ENCODE measurements at regions of chr9 and their contacts with region 1.

Region 1: GRCh38 chr9:19992556-19992955 is 203.7 kb upstream of the SLC24A2 start:
- DNase-seq: no peak
- ATAC-seq: no peak
- H3K4me3 ChIP-seq: no peak overlapping the region
- H3K4me3 Mint-ChIP-seq: no peak overlapping the region
- H3K27ac ChIP-seq: no peak overlapping the region
- H3K27ac Mint-ChIP-seq: no peak overlapping the region
- H3K4me1 ChIP-seq: no peaks in the 10 kb centered on the region
- H3K4me1 Mint-ChIP-seq: peaks cover 5% of the 10 kb centered on the region
- H3K27me3 ChIP-seq: no peaks in the 10 kb centered on the region
- H3K27me3 Mint-ChIP-seq: no peaks in the 10 kb centered on the region
- CTCF ChIP-seq: no peak

Region 2: DNA sequence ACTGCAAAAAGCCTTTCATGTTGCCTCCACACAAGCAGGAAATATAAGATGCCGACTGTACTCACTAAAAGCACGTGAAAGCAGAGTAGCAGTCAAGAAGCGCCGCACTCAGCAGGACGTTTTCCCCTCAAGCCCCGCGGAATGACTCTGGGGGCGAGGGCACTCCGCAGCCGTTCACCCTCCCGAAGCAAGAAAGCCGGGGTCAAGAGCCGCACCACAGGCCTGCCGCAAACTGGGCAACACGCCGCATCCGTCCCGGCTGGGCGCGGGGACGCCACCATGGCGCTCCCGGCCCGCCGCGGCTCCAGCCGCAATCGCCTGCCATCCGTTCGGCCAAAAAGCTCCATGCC is 612.9 kb before region 1 on chr9:
- CTCF ChIA-PET with region 1: no interaction called
- POLR2A ChIA-PET with region 1: no interaction called
- intact Hi-C with region 1: no loop called
- DNase-seq: peak in 8 of 14 experiments; percentile 23 to 73 (median 36)
- ATAC-seq: peak; percentile 49
- H3K4me3 ChIP-seq: peak overlapping the region; percentile 60
- H3K4me3 Mint-ChIP-seq: peak overlapping the region; percentile 90
- H3K27ac ChIP-seq: peak overlapping the region; percentile 88 to 90
- H3K27ac Mint-ChIP-seq: peak overlapping the region; percentile 94
- H3K4me1 ChIP-seq: peaks cover 23% of the 10 kb centered on the region
- H3K4me1 Mint-ChIP-seq: peaks cover 52% of the 10 kb centered on the region
- H3K27me3 ChIP-seq: no peaks in the 10 kb centered on the region
- H3K27me3 Mint-ChIP-seq: no peaks in the 10 kb centered on the region
- CTCF ChIP-seq: no peak

Region 3: GRCh38 chr9:19940811-19941535 is 51.6 kb before region 1 on chr9:
- CTCF ChIA-PET with region 1: no interaction called
- POLR2A ChIA-PET with region 1: no interaction called
- intact Hi-C with region 1: no loop called
- DNase-seq: no peak
- ATAC-seq: no peak
- H3K4me3 ChIP-seq: no peak overlapping the region
- H3K4me3 Mint-ChIP-seq: no peak overlapping the region
- H3K27ac ChIP-seq: no peak overlapping the region
- H3K27ac Mint-ChIP-seq: no peak overlapping the region
- H3K4me1 ChIP-seq: no peaks in the 10 kb centered on the region
- H3K4me1 Mint-ChIP-seq: no peaks in the 10 kb centered on the region
- H3K27me3 ChIP-seq: no peaks in the 10 kb centered on the region
- H3K27me3 Mint-ChIP-seq: peaks cover 16% of the 10 kb centered on the region
- CTCF ChIP-seq: no peak

Region 4: DNA sequence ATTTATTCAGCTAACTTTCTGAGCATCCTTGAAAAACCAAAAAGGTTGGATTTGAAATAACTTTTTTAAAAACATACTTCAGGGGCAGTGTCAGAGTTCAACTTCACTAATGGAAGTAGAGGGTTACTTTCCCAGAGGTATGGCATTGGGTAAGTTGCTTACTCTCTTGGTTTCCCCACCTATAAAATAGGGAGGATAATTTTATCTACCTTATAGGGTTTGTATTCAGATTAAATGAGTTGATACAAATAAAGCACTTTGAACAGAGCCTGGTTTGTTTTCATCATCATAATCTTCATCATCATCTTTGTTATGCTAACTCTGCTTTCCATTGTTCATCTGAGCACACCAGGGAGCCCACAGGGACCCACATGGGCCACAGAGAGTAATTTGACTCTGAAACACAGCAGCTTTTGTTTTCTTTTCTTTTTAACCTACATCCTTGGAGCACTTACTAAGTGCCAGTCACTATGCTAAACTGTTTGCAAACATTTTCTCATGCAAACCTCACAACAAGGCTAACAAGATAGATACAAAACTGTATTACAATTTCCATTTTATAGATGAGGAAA is 24.6 kb before region 1 on chr9:
- CTCF ChIA-PET with region 1: no interaction called
- POLR2A ChIA-PET with region 1: no interaction called
- intact Hi-C with region 1: loop called in 1 of 2 experiments (anchors 2 kb)
- DNase-seq: no peak
- ATAC-seq: no peak
- H3K4me3 ChIP-seq: no peak overlapping the region
- H3K4me3 Mint-ChIP-seq: no peak overlapping the region
- H3K27ac ChIP-seq: no peak overlapping the region
- H3K27ac Mint-ChIP-seq: no peak overlapping the region
- H3K4me1 ChIP-seq: no peaks in the 10 kb centered on the region
- H3K4me1 Mint-ChIP-seq: no peaks in the 10 kb centered on the region
- H3K27me3 ChIP-seq: no peaks in the 10 kb centered on the region
- H3K27me3 Mint-ChIP-seq: peaks cover 7% of the 10 kb centered on the region
- CTCF ChIP-seq: no peak

Region 5: DNA sequence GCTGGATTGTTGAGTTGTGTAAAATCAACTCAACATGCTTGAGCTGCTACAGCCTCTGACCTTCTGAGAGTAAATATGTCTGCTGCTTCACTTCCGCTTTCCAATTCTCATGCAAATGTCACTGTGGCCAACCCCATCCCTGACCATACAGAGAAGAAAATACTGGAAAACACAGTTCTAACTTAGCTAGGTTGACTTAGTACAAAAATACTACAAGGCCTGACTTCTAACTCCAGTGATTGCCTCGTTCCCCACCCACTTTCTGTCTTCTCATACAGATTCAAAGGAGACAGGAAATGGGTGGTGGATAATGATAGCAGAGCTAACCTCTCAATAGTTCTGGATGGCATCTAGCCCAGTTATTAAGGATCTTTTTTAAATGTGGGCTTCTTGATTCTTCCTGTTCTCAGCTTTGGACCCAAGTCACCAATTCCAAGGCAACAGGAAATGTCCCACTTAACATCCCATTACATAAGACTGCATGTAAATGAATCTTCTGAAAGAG is 22.9 kb after region 1 on chr9:
- CTCF ChIA-PET with region 1: no interaction called
- POLR2A ChIA-PET with region 1: no interaction called
- intact Hi-C with region 1: loop called in 1 of 2 experiments (anchors 1 kb)
- DNase-seq: peak in 3 of 14 experiments; percentile 7 to 25 (median 11)
- ATAC-seq: peak; percentile 58
- H3K4me3 ChIP-seq: no peak overlapping the region
- H3K4me3 Mint-ChIP-seq: no peak overlapping the region
- H3K27ac ChIP-seq: no peak overlapping the region
- H3K27ac Mint-ChIP-seq: peak overlapping the region; percentile 60
- H3K4me1 ChIP-seq: peaks cover 10% of the 10 kb centered on the region
- H3K4me1 Mint-ChIP-seq: peaks cover 17% of the 10 kb centered on the region
- H3K27me3 ChIP-seq: no peaks in the 10 kb centered on the region
- H3K27me3 Mint-ChIP-seq: no peaks in the 10 kb centered on the region
- CTCF ChIP-seq: no peak